Heart left ventricle (tissue), 16 donors: ENCODE measurements at regions of chr22 and their contacts with region 1.

Region 1: DNA sequence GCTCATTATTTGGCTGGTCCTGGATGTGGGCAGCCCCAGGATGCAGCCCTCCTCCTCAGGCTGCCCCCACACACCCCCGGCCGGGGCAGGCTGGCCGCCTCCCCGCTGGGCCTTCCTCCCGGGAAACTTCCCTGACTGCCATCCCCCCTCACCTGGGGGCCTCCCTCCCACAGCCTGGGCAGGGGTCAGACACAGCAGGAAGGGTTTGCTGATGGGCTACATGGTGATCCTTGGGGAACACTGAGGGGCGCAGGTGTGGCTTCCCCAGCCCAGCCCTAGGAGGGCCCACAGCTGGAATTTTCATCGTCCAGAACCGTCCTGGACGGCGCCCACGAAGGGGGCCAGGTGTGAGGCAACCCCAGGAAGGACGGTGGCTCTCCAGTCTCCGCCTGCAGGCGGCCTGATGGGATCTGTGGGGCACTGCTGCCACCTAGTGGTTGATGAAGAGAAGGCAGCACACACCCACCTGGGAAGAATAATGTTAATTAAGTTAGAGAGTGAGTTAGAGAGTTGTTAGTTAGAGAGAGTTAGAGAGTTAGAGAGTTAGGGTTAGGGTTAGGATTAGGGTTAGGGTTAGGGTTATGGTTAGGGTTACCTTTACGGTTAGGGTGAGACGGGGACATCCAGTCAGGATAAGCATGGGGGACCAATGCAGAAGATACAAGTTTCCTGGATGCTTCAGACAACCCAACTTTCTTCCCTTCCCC is 75.9 kb upstream of the PRR5 start:
- DNase-seq: peak; percentile 58 to 87 (median 68)
- ATAC-seq: peak; percentile 68 to 78 (median 72)
- H3K4me3 ChIP-seq: no peak overlapping the region
- H3K27ac ChIP-seq: no peak overlapping the region
- H3K4me1 ChIP-seq: peaks cover 0 to 5% (median 0%) of the 10 kb centered on the region in 12 donors
- H3K27me3 ChIP-seq: peaks cover 0 to 15% (median 0%) of the 10 kb centered on the region in 9 donors
- CTCF ChIP-seq: peak; percentile 94 to 99 (median 96)
- POLR2A ChIP-seq: no peak

Region 2: GRCh38 chr22:43393132-43393843 is 1232.8 kb before region 1 on chr22:
- intact Hi-C with region 1: loop called in 8 of 10 experiments (anchors 2 to 10 kb)
- DNase-seq: peak in 1 of 5 donors; percentile 24
- ATAC-seq: no peak
- H3K4me3 ChIP-seq: no peak overlapping the region
- H3K27ac ChIP-seq: no peak overlapping the region
- H3K4me1 ChIP-seq: peaks cover 0 to 2% (median 0%) of the 10 kb centered on the region in 12 donors
- H3K27me3 ChIP-seq: peaks cover 0 to 5% (median 0%) of the 10 kb centered on the region in 9 donors
- CTCF ChIP-seq: no peak
- POLR2A ChIP-seq: no peak

Region 3: DNA sequence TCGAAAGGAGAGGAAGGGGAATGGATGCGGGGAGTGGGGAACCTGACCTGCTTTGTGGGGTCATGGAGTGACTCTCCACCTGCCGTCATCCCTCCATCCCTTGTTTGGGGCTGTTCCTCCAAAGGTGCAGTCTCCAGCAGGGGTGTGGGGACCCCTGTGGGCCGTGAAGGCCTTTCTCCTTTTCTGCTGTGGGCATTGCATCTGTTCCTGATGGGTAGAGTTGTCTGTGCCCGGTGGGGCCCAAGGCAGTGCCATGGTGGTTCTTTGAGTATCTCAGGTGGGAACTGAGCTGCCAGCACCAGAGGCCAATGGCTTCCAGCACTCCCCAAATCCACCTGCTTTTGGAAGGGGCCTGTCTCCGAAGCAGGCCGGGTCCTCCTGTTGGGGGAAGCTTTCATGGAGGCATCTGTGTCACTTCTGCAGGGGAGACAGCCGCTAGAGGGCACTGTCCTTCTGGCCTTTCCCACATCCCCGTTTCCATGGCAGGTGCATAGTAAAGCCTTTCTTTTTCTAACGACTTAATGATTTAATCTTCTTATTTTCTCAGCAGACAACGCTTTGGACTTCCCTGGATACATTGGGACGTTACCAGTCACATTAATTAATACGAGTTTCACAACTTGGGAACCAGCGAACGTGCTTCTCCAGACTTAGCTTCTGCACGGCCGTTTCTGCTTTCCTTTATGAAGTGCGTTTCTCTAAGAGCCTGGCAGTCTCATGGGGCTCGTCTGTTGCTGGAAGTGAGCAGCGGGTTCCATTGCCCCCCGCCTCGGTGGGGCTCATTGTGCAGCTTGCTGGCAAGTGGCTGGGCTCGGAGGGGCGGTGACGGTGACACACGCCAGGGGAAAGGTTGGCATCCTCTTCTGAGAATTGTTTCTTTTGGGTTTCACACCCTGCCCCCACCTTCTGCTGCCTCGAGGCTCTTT is 544.9 kb before region 1 on chr22:
- intact Hi-C with region 1: loop called in 9 of 10 experiments (anchors 2 to 10 kb)
- DNase-seq: peak; percentile 65 to 81 (median 76)
- ATAC-seq: peak in 1 of 4 donors; percentile 42
- H3K4me3 ChIP-seq: no peak overlapping the region
- H3K27ac ChIP-seq: no peak overlapping the region
- H3K4me1 ChIP-seq: peaks cover 0 to 32% (median 7%) of the 10 kb centered on the region in 12 donors
- H3K27me3 ChIP-seq: no peaks in the 10 kb centered on the region
- CTCF ChIP-seq: peak; percentile 73 to 93 (median 85)
- POLR2A ChIP-seq: no peak

Region 4: DNA sequence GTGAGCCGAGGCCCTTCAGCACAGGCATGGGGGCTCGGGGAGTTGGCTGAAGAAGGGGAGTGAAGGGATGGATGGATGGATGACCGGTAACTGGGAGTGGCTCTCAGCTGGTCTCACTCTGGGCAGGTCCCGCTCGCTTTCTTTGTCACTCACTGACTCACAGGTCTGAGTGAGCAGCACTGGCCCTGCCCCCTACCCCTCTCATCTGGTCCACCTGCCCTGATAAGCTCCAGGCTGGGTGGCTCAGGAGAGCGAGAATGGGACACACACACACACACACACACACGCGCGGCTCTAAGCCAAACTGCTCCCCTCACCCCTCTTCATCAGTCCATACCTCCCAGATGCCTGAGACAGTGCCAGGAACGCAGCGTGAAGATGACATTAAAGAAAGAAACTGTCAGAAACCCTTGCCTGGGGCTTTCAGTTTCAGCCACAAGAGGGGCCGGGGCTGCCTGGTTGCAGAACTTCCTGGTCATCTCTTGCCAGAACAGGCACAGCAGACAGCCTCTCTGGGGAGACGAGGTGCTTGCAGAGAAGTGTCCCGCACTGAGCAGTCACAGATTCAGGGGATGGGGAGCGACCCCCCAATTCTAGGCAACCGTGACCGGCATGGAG is 296.8 kb before region 1 on chr22:
- intact Hi-C with region 1: loop called in 2 of 10 experiments (anchors 10 kb)
- DNase-seq: no peak
- ATAC-seq: no peak
- H3K4me3 ChIP-seq: no peak overlapping the region
- H3K27ac ChIP-seq: no peak overlapping the region
- H3K4me1 ChIP-seq: peaks cover 0 to 25% (median 15%) of the 10 kb centered on the region in 12 donors
- H3K27me3 ChIP-seq: peaks cover 0 to 44% (median 15%) of the 10 kb centered on the region in 9 donors
- CTCF ChIP-seq: no peak
- POLR2A ChIP-seq: no peak

Region 5: GRCh38 chr22:44437221-44438055 is 188.7 kb before region 1 on chr22:
- intact Hi-C with region 1: loop called in 1 of 10 experiments (anchors 10 kb)
- DNase-seq: peak in 1 of 5 donors; percentile 14
- ATAC-seq: no peak
- H3K4me3 ChIP-seq: no peak overlapping the region
- H3K27ac ChIP-seq: no peak overlapping the region
- H3K4me1 ChIP-seq: no peaks in the 10 kb centered on the region
- H3K27me3 ChIP-seq: no peaks in the 10 kb centered on the region
- CTCF ChIP-seq: no peak
- POLR2A ChIP-seq: no peak

Region 6: DNA sequence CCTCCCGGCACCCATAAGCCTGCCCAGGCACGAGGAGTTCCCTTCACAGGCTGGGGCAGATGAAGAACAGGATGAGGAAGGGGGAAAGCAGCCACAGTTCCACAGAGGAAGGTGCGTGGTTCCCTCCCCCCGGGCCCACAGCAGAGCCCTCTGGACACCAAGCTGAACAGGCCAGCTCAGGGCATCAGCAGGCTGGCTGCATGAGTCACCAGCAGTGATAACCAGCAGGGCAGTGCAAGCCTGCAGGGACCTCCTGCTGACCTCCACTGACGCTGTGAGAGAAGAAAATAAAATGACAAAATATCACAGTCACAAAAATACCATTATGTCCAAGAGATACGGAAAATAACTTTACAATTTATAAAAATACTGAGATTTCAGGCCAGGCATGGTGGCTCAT is 139.6 kb before region 1 on chr22:
- intact Hi-C with region 1: no loop called
- DNase-seq: peak in 2 of 5 donors; percentile 62 to 69
- ATAC-seq: peak; percentile 62 to 92 (median 89)
- H3K4me3 ChIP-seq: no peak overlapping the region
- H3K27ac ChIP-seq: no peak overlapping the region
- H3K4me1 ChIP-seq: peaks cover 0 to 9% (median under 1%) of the 10 kb centered on the region in 12 donors
- H3K27me3 ChIP-seq: no peaks in the 10 kb centered on the region
- CTCF ChIP-seq: no peak
- POLR2A ChIP-seq: no peak

Region 7: DNA sequence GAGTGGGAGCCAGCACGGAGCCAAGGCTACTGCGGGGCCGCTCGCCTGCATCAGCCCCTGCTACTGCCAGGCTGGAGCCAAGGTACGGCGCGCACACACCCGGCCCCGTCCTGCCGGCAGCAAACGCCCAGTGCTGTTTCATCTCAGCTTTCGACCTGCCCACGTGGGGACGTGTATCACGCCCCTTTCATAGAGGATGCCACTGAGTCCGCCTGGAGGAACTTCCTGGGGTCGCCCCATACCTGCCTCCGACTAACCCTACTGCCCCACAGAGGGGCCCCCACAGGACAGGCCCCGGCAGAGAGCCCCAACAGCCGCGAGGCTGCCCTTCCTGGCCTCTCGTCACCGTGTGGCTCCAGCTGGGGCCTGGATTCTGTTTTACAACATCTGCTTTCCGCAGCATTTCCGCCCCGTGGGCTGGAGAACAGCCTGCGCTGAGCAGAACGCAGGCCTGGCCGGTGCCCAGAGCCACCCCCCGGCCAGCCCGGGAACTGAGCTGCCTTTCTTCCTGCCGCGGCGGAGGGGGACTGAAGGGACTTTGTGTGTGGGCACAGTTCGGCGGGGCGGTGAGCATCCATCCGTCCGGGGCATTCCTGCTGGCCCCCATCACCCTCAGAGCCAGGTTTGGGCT is 103.4 kb after region 1 on chr22:
- intact Hi-C with region 1: no loop called
- DNase-seq: peak; percentile 68 to 81 (median 72)
- ATAC-seq: peak; percentile 60 to 87 (median 80)
- H3K4me3 ChIP-seq: peak overlapping the region in 8 of 12 donors; percentile 3 to 26 (median 20)
- H3K27ac ChIP-seq: peak overlapping the region in 11 of 12 donors; percentile 13 to 79 (median 30)
- H3K4me1 ChIP-seq: peaks cover 0 to 20% (median 12%) of the 10 kb centered on the region in 12 donors
- H3K27me3 ChIP-seq: no peaks in the 10 kb centered on the region
- CTCF ChIP-seq: peak in 3 of 12 donors; percentile 13 to 30 (median 18)
- POLR2A ChIP-seq: no peak